ENCODE measurements at regions of chr9 and their contacts with region 1.

Region 1: DNA sequence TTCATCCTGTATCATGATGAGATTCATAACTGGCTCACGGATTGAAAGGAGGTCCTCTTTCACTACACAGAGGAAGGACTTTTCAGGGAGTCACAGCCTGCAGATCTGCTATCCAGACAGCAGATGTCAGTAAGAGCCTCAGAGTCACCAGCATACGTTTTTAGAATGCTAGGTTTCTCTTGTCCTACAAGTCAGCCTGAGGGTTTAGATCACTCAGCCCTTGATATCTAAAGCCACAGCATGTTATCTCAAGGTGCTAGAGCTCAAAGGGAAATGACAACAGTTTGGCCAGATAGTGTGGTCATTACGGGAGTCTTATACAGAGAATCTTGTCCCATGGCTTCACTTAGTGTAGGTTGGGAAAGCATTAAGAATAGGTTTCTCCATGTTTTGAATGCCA is 30.9 kb upstream of the SLC46A2 start:
- DNase-seq: no peak
- H3K4me3 ChIP-seq: no peak overlapping the region
- H3K27ac ChIP-seq: no peak overlapping the region
- H3K4me1 ChIP-seq: peaks cover 0 to 16% (median 7%) of the 10 kb centered on the region in 4 donors
- H3K27me3 ChIP-seq: no peaks in the 10 kb centered on the region
- CTCF ChIP-seq: peak in 4 of 5 experiments; percentile 34 to 39 (median 35)
- EP300 ChIP-seq: no peak
- POLR2A ChIP-seq: no peak

Region 2: GRCh38 chr9:113042884-113043657 is 121.5 kb after region 1 on chr9:
- in situ Hi-C with region 1: loop called in 1 of 4 experiments (anchors 25 kb)
- intact Hi-C with region 1: no loop called
- DNase-seq: no peak
- H3K4me3 ChIP-seq: no peak overlapping the region
- H3K27ac ChIP-seq: no peak overlapping the region
- H3K4me1 ChIP-seq: no peaks in the 10 kb centered on the region
- H3K27me3 ChIP-seq: no peaks in the 10 kb centered on the region
- CTCF ChIP-seq: no peak
- EP300 ChIP-seq: no peak
- POLR2A ChIP-seq: no peak

Region 3: GRCh38 chr9:113125386-113126035 is 204.0 kb after region 1 on chr9:
- in situ Hi-C with region 1: loop called in 2 of 4 experiments (anchors 25 kb)
- intact Hi-C with region 1: no loop called
- DNase-seq: no peak
- H3K4me3 ChIP-seq: no peak overlapping the region
- H3K27ac ChIP-seq: no peak overlapping the region
- H3K4me1 ChIP-seq: no peaks in the 10 kb centered on the region
- H3K27me3 ChIP-seq: peaks cover 27% of the 10 kb centered on the region
- CTCF ChIP-seq: no peak
- EP300 ChIP-seq: no peak
- POLR2A ChIP-seq: no peak

Region 4: DNA sequence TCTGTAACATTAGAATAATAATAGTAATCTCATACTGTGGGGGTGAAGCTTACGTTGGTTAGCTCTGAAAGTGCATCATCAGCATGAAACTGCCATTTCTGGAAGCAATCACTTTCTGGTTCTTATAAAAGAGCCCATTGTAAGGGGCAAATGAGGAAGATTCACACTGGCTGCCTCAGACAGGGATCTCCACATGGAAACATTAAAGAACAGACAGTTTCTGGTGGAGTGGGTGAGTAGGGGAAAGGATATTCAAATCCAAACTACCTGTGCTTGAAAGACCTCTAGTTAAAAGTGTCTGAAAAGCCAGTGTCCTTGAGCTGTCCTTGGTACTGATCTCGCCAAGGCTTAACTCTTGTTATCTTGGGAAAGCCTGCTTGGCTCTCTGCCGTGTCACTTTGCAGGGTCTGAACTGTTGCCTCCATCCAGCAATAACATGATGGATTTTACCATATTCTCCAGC is 210.2 kb after region 1 on chr9:
- in situ Hi-C with region 1: loop called in 1 of 4 experiments (anchors 25 kb)
- intact Hi-C with region 1: no loop called
- DNase-seq: no peak
- H3K4me3 ChIP-seq: no peak overlapping the region
- H3K27ac ChIP-seq: no peak overlapping the region
- H3K4me1 ChIP-seq: no peaks in the 10 kb centered on the region
- H3K27me3 ChIP-seq: peaks cover 28% of the 10 kb centered on the region
- CTCF ChIP-seq: no peak
- EP300 ChIP-seq: no peak
- POLR2A ChIP-seq: no peak

Measured in transverse colon (tissue), 4 donors.